ENCODE measurements at regions of chr9 and their contacts with region 1.

Region 1: DNA sequence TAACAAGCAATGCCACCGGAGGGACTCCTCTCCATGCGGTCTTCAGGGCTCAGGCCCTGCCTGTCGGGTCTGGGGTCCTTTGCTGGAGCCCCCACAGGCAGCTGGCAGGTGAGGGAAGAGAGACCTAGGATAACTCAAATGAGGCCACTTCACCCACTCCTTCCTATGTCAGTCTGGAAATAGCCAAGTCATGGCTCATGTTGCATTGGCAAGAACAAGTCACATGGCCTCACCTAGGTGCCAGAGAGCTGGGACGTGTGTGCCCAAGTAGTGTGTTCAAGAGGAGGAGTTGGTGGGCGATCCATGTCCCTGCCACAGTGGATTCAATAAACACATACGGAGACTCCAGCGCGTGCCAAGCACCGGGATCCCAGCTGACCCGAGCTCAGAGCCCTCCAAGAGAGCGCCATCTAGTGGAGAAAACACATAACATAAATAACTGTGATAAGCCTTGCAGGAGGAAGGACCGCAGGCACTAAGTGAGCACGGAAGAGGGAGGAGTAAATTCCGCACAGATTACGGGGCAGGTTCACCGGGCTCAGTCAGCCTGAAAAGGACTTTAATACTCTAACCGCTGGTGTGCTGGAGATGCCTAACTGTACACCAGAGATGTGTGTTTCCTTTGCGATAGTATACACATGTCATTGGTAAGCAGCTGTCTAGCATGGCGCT is 580.8 kb downstream of the CCDC171 start:
- DNase-seq: peak in 1 of 2 experiments; percentile 50
- H3K4me3 ChIP-seq: no peak overlapping the region
- H3K27ac ChIP-seq: no peak overlapping the region
- H3K4me1 ChIP-seq: no peaks in the 10 kb centered on the region
- H3K27me3 ChIP-seq: no peaks in the 10 kb centered on the region
- CTCF ChIP-seq: peak; percentile 59

Region 2: GRCh38 chr9:15389173-15389572 is 744.5 kb before region 1 on chr9:
- CTCF ChIA-PET with region 1: no interaction called
- POLR2A ChIA-PET with region 1: no interaction called
- intact Hi-C with region 1: no loop called
- DNase-seq: no peak
- H3K4me3 ChIP-seq: no peak overlapping the region
- H3K27ac ChIP-seq: no peak overlapping the region
- H3K4me1 ChIP-seq: no peaks in the 10 kb centered on the region
- H3K27me3 ChIP-seq: no peaks in the 10 kb centered on the region
- CTCF ChIP-seq: no peak

Region 3: DNA sequence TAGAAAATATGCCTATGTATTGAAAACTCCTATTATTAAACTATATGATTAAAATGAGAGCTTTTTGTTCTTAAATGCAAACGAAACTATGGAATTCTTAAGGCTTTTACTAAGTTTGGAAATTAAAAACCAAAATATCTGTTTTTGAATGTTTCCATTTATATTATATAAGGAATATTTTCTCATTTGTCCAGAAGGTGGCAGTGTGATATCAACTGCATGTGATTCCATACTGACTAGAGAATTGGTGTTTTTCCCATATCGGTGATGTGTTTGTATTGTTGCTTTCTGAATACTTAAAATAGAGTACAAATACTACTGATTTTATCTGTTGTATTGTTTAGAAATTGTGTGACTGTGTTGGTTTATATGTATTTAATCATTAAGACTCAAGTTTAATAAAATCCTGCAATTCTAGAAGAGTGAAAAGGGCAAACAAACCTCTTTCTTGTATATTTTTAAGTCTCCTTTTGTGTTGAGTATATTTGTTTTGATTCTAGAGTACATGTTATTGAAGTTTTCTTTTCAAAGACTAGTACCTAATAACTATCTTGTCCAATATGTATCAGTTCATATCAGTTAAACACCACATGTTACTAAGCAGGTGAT is 260.0 kb before region 1 on chr9:
- CTCF ChIA-PET with region 1: no interaction called
- POLR2A ChIA-PET with region 1: no interaction called
- intact Hi-C with region 1: loop called (anchors 1 kb)
- DNase-seq: no peak
- H3K4me3 ChIP-seq: no peak overlapping the region
- H3K27ac ChIP-seq: peak overlapping the region; percentile 59
- H3K4me1 ChIP-seq: peaks cover 9% of the 10 kb centered on the region; the same call in 1 of the 2 replicates
- H3K27me3 ChIP-seq: no peaks in the 10 kb centered on the region
- CTCF ChIP-seq: peak; percentile 75

Region 4: DNA sequence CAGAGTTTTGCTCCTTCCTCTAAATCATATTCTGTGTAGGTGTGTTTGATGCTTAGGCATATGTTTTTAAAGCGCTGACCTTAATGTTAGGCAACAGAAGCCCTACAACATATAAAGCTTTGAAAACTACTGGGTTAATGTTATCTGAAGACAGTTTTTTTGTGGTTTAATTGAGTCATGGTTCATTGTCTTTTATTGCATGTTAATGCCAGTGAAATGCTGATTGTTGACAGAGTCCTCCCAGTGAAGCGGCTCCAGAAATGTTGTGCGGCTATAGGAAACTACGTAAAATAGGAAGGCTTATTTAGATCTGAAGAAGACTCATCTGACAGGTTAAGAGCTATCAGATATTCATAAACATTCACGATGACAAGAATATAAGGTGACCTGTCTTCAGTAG is 156.3 kb before region 1 on chr9:
- CTCF ChIA-PET with region 1: no interaction called
- POLR2A ChIA-PET with region 1: no interaction called
- intact Hi-C with region 1: no loop called
- DNase-seq: no peak
- H3K4me3 ChIP-seq: no peak overlapping the region
- H3K27ac ChIP-seq: no peak overlapping the region
- H3K4me1 ChIP-seq: no peaks in the 10 kb centered on the region
- H3K27me3 ChIP-seq: no peaks in the 10 kb centered on the region
- CTCF ChIP-seq: no peak

Region 5: GRCh38 chr9:16039218-16039987 is 94.3 kb before region 1 on chr9:
- CTCF ChIA-PET with region 1: no interaction called
- POLR2A ChIA-PET with region 1: no interaction called
- intact Hi-C with region 1: loop called (anchors 5 kb)
- DNase-seq: peak in 1 of 2 experiments; percentile 18
- H3K4me3 ChIP-seq: no peak overlapping the region
- H3K27ac ChIP-seq: no peak overlapping the region
- H3K4me1 ChIP-seq: no peaks in the 10 kb centered on the region
- H3K27me3 ChIP-seq: no peaks in the 10 kb centered on the region
- CTCF ChIP-seq: no peak

Region 6: DNA sequence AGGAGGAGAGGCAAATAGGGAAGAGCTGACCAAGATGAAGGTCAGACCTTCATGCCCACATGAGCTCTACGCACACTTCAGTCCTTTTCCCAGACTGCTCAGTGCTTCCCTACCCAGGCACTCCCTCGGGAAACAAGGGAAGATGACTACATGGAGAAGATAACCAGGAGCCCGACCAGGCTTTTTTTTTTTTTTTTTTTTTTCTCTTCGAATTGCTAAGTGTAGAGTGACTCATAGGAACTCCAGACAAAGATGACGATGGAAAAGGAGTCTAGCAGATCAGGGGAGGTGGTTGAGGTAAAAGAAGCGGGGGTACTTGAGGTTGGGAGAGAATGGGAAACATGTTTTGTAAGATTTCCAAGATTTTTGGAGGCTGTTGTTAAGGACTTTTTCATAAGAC is 210.7 kb after region 1 on chr9:
- CTCF ChIA-PET with region 1: no interaction called
- POLR2A ChIA-PET with region 1: no interaction called
- intact Hi-C with region 1: no loop called
- DNase-seq: no peak
- H3K4me3 ChIP-seq: no peak overlapping the region
- H3K27ac ChIP-seq: no peak overlapping the region
- H3K4me1 ChIP-seq: peaks cover 11% of the 10 kb centered on the region
- H3K27me3 ChIP-seq: no peaks in the 10 kb centered on the region
- CTCF ChIP-seq: no peak

Measured in PC-9 (cell line).